Endothelial cell of umbilical vein (primary cell): ENCODE measurements at regions of chr2 and their contacts with region 1.

Region 1: GRCh38 chr2:221779614-221780067 is 207.5 kb upstream of the EPHA4 start:
- DNase-seq: peak; percentile 91
- H3K4me3 ChIP-seq: no peak overlapping the region
- H3K27ac ChIP-seq: peak overlapping the region; percentile 86
- H3K4me1 ChIP-seq: peaks cover 23% of the 10 kb centered on the region
- H3K27me3 ChIP-seq: no peaks in the 10 kb centered on the region
- CTCF ChIP-seq: no peak
- POLR2A ChIP-seq: no peak

Region 2: DNA sequence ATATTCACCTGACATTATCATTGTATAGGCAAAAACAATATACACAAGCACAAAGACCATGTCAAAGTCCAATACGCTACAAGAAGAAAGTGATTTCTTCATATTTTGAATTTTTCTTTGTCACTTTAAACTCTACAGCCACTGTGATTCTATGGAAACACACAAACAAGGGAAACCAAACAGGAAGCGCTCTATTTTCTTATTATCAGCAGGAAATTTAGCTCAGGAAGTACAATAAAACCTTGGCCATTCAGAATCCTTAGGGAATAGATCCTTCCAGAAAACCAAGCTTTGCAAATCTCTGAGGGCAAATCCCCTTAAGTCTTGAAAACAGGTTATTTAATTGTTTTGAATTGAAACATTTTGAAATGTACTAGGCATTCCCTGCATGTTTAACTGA is 543.7 kb before region 1 on chr2:
- CTCF ChIA-PET with region 1: no interaction called
- POLR2A ChIA-PET with region 1: no interaction called
- dilution Hi-C with region 1: no loop called
- intact Hi-C with region 1: loop called (anchors 1 kb)
- DNase-seq: peak; percentile 88
- H3K4me3 ChIP-seq: peak overlapping the region in 1 of 3 experiments; percentile 21
- H3K27ac ChIP-seq: peak overlapping the region; percentile 83
- H3K4me1 ChIP-seq: peaks cover 15% of the 10 kb centered on the region
- H3K27me3 ChIP-seq: no peaks in the 10 kb centered on the region
- CTCF ChIP-seq: no peak
- POLR2A ChIP-seq: no peak

Region 3: DNA sequence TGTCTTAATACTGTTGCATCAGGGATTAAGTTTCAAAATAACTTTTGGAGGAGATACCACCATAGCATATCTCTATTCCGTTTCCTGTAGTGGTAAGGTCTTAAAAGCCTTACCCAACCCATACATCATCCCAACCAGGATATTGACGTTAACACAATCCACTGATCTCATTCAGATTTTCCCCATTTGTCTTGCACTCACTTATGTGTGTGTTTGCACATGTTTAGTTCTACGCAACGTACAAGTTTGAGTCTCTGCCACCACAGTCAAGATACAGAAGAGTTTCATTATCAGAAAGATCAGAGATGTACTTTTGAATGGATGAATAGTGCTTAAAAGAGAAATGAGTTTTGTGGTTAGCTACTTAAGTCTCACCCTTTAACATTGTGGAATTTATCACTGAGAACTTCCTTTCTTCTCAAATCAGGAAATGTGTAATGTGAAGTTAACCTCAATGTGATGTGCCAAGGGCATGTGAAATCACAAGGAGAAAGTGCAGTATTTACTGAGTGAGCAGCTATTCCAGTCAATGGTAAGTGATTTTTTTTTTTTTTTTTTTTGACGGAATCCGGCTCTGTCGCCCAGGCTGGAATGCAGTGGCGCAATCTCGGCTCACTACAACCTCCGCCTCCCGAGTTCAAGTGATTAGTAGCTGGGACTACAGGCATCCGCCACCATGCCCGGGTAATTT is 138.3 kb before region 1 on chr2:
- CTCF ChIA-PET with region 1: no interaction called
- POLR2A ChIA-PET with region 1: no interaction called
- dilution Hi-C with region 1: no loop called
- intact Hi-C with region 1: loop called (anchors 1 kb)
- DNase-seq: peak; percentile 94
- H3K4me3 ChIP-seq: no peak overlapping the region
- H3K27ac ChIP-seq: peak overlapping the region; percentile 53
- H3K4me1 ChIP-seq: peaks cover 13% of the 10 kb centered on the region
- H3K27me3 ChIP-seq: no peaks in the 10 kb centered on the region
- CTCF ChIP-seq: no peak
- POLR2A ChIP-seq: no peak

Region 4: DNA sequence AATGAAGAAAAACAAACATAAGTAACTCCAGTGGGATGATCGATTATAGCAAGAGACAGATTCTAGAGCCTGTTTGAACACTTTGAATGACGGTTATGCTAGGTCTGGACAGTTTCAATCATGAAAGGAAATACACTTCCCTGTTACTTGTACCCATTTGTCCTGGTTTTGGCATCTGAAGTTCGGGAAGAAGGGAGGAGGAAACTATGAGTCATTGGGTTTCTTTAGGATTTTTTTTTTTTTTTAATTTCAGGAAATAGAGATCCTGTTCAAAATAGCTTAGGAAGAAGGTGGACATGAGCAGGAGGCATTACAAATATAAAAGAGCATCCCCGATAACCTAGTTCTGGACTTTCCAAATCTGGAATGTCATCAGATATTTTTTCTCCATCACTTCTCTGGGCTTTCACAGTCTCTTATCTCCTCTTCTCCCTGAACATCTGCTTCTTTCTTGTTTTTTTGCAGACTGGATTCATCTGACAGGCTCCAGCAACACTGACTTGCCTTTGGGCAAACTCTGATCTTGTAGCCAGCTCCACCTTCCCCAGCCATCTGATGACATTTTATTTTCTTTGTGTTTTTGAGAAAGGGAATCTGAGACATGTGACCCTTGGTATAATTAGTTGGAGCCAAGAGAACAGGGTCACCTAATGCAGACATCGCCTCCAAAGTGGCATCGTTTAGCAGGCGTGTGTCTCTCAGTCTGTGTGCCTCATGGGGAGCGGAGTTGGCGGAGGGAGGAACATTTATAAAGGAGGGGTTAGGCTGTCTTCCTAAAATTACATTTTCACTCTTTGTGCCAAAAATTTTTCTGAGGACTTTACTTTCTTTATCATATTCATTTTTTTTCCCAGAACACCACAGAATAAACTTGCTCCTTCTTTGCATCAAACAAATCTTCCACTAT is 12.3 kb before region 1 on chr2:
- CTCF ChIA-PET with region 1: interaction called, 12 read pairs
- POLR2A ChIA-PET with region 1: no interaction called
- dilution Hi-C with region 1: no loop called
- intact Hi-C with region 1: loop called (anchors 1 kb)
- DNase-seq: peak; percentile 66
- H3K4me3 ChIP-seq: no peak overlapping the region
- H3K27ac ChIP-seq: peak overlapping the region; percentile 53
- H3K4me1 ChIP-seq: peaks cover 15% of the 10 kb centered on the region
- H3K27me3 ChIP-seq: no peaks in the 10 kb centered on the region
- CTCF ChIP-seq: no peak
- POLR2A ChIP-seq: no peak

Region 5: GRCh38 chr2:221810245-221810644 is 30.6 kb after region 1 on chr2:
- CTCF ChIA-PET with region 1: no interaction called
- POLR2A ChIA-PET with region 1: no interaction called
- dilution Hi-C with region 1: no loop called
- intact Hi-C with region 1: no loop called
- DNase-seq: no peak
- H3K4me3 ChIP-seq: no peak overlapping the region
- H3K27ac ChIP-seq: no peak overlapping the region
- H3K4me1 ChIP-seq: no peaks in the 10 kb centered on the region
- H3K27me3 ChIP-seq: no peaks in the 10 kb centered on the region
- CTCF ChIP-seq: no peak
- POLR2A ChIP-seq: no peak